ENCODE measurements at regions of chr2 and their contacts with region 1.

Region 1: GRCh38 chr2:207625018-207625907 is at the start of gene METTL21A:
- DNase-seq: peak; percentile 93
- H3K4me3 ChIP-seq: peak within 1 kb of the TSS; percentile 59 to 92 (median 76)
- H3K27ac ChIP-seq: peak within 1 kb of the TSS; percentile 89 to 95 (median 94)
- H3K4me1 ChIP-seq: peaks cover 0 to 33% (median 24%) of the 10 kb centered on the region in 4 donors
- H3K27me3 ChIP-seq: no peaks in the 10 kb centered on the region
- CTCF ChIP-seq: peak in 3 of 4 experiments; percentile 8 to 45 (median 32)
- EP300 ChIP-seq: no peak
- POLR2A ChIP-seq: peak in 1 of 2 donors; percentile 29
- total RNA-seq, gene METTL21A: 12.9 to 23.5 (median 20.5) TPM

Region 2: DNA sequence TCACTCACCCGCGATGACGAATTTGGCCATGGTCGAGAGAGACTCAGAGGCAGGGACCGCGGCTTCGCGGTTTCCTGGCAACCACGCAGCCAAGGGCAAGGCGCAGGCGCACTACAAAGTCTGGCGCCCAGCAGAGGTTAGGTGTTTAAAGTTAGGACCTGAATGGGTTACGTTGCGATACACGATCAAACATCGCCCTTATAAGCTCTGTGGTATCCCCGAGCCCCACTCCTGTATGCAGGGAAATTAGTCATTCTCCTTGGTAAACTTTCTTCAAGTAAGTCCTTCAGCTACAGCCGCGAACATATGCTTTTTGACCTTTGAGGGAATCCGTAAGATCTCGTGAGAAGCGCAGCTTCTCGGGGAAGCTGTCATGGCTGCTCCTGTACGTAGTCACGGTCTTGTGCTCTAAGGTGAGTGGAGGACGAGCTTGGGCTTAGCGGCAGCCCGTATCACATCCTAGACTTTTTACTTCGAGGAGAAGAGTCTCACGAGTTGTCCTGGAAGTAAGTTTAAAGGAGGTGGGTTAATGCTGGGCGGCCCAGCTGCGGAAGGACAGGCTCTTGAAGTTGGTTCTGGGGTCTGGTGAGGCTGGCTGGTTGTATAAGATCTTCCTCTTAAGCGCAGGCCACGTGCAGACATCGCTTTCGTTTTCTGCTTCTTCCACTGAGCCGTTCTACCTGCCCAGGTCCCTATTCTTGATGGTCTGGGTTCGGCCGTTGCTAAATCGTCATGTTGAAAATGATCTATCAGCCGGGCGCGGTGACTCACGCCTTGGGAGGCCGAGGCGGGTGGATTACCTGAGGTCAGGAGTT is 859.8 kb before region 1 on chr2 and contains the starts of genes FASTKD2 and MDH1B:
- intact Hi-C with region 1: loop called (anchors 10 kb)
- DNase-seq: peak; percentile 95
- H3K4me3 ChIP-seq: peak within 1 kb of the TSS; percentile 66 to 88 (median 74)
- H3K27ac ChIP-seq: peak within 1 kb of the TSS; percentile 81 to 93 (median 87)
- H3K4me1 ChIP-seq: peaks cover 0 to 38% (median 30%) of the 10 kb centered on the region in 4 donors
- H3K27me3 ChIP-seq: no peaks in the 10 kb centered on the region
- CTCF ChIP-seq: no peak
- EP300 ChIP-seq: no peak
- POLR2A ChIP-seq: peak; percentile 42 to 43
- total RNA-seq, gene FASTKD2: 27.3 to 35.3 (median 32.0) TPM
- total RNA-seq, gene MDH1B: 1.3 to 2.2 (median 1.8) TPM

Region 3: DNA sequence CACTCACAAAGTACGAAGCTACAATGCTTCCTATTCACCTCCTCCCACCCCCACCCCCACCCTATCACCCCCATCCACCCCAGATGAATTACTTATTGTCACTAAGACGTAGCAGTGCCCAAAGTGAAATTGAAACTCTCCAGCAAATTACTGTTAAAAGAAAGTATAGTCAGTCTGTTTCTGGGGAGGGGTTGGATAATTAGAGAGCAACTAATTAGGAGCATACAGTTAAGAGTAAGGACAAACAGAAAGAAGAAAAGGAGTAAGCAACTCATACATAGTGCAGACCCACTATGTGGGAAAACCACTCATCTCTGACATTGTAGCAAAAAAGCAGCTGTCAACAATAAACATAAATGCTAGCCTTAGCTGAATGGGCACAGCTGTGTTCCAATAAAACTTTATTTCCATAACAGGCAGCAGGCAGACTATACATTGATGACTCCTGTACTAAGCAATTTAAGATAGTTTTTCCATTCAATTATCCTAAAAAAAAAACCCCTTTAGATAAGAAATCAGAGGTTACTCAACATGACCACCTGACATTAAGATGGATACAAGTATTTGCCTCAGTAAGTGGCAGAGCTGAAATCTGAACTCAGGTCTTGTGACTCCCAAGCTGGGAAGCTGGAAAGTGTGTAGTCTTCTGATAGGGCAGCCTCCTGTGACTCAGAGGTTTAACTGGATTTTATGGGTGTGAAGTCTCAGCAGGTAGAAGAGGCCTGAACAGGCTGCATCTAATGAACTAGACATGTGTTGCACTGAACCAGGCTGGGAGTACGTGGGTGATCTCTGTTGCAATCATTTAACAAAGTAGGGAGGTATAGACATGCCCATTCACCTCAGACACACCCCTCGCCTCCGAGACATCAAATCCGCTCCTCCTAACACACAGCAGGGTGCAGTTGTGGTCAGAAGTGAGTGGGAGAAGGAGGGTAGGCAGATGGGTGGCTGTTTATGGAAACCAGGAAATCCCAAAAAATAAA is 287.7 kb before region 1 on chr2:
- intact Hi-C with region 1: no loop called
- DNase-seq: no peak
- H3K4me3 ChIP-seq: no peak overlapping the region
- H3K27ac ChIP-seq: peak overlapping the region in 1 of 4 donors; percentile 27
- H3K4me1 ChIP-seq: peaks cover 0 to 18% (median 14%) of the 10 kb centered on the region in 4 donors
- H3K27me3 ChIP-seq: no peaks in the 10 kb centered on the region
- CTCF ChIP-seq: no peak
- EP300 ChIP-seq: no peak
- POLR2A ChIP-seq: no peak

Region 4: DNA sequence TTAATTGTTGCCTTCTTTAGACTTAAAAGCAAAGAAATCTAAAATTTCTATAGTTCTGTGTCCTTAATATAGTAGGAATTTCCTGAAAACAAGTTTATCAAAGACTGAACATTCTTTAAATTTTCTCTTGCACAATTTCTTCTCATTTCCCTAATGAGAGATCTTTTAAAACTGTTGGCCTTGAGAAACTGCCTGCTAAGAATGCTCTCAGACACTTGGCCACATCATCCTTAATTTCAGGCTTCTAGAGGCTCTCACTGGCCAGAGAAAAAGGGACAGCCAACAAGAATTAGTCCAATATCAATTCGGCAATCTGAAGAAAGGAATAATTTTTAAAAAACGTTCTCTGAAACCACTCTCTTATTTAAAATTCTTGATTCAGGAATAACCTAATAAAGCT is 262.5 kb before region 1 on chr2:
- intact Hi-C with region 1: no loop called
- DNase-seq: no peak
- H3K4me3 ChIP-seq: no peak overlapping the region
- H3K27ac ChIP-seq: no peak overlapping the region
- H3K4me1 ChIP-seq: no peaks in the 10 kb centered on the region
- H3K27me3 ChIP-seq: no peaks in the 10 kb centered on the region
- CTCF ChIP-seq: no peak
- EP300 ChIP-seq: no peak
- POLR2A ChIP-seq: no peak

Region 5: DNA sequence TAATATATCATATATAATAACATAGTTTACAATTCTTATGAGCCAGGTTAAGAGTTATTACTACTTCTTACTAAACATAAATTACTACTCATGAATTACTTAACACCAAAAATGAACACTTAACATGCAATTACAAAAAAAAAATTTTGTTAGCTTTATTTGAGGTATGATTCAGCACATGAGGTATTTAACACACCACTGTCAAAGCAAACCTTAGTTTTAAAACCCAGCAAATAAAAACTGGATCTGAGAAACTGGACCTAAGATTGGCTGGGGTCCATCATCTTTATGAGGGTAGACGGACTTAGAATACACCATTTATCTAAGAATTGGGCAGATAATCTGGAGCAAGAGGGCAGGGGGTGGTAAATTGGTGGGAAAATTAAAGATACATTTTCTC is 177.3 kb before region 1 on chr2:
- intact Hi-C with region 1: no loop called
- DNase-seq: no peak
- H3K4me3 ChIP-seq: no peak overlapping the region
- H3K27ac ChIP-seq: no peak overlapping the region
- H3K4me1 ChIP-seq: no peaks in the 10 kb centered on the region
- H3K27me3 ChIP-seq: no peaks in the 10 kb centered on the region
- CTCF ChIP-seq: no peak
- EP300 ChIP-seq: no peak
- POLR2A ChIP-seq: no peak

Region 6: GRCh38 chr2:207529330-207530159 is 95.7 kb before region 1 on chr2 and contains the start of gene CREB1:
- intact Hi-C with region 1: loop called (anchors 1 kb)
- DNase-seq: peak; percentile 99
- H3K4me3 ChIP-seq: peak within 1 kb of the TSS; percentile 80 to 94 (median 90)
- H3K27ac ChIP-seq: peak within 1 kb of the TSS; percentile 98 to 100 (median 98)
- H3K4me1 ChIP-seq: peaks cover 0 to 47% (median 38%) of the 10 kb centered on the region in 4 donors
- H3K27me3 ChIP-seq: no peaks in the 10 kb centered on the region
- CTCF ChIP-seq: no peak
- EP300 ChIP-seq: peak in 2 of 4 donors; percentile 57 to 91
- POLR2A ChIP-seq: peak; percentile 23 to 95
- total RNA-seq, gene CREB1: 31.3 to 52.0 (median 47.0) TPM

Region 7: DNA sequence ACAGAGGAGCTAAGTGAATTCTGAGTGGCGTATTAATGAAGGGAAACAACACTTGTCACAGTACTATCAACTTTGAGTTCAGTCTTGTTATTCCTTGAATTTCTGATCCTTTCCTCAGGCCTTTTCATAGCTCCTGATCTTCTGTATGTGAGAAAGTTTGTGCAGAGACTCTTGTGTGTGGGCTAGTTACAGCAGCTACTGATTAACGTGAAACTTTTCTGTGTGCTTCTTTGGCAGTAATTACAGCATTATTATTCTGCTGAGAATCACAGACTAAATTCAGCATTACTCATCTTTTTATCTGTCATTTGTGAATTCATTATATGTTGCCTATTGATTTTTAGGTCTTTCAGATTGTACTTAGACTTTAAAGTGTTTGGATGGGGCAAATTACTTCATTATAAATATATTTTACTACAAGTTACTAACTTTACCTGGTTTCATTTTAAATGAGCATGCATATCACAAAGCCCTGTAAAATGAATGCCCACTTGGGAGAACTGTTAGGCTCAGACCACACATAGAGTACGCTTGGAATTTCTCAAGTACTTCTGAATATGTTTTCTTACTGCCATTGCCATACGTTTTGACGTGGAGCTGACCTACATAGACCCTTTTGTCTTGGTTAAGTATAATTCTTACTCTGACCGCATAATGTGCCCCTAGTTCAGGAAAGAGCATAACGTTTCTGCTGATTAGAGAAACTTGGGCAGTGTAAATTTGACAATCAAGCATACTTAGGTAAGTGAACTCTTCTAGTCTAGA is 59.3 kb before region 1 on chr2:
- intact Hi-C with region 1: no loop called
- DNase-seq: no peak
- H3K4me3 ChIP-seq: no peak overlapping the region
- H3K27ac ChIP-seq: no peak overlapping the region
- H3K4me1 ChIP-seq: no peaks in the 10 kb centered on the region
- H3K27me3 ChIP-seq: no peaks in the 10 kb centered on the region
- CTCF ChIP-seq: no peak
- EP300 ChIP-seq: no peak
- POLR2A ChIP-seq: no peak

Region 8: GRCh38 chr2:207769597-207770486 is 144.6 kb after region 1 on chr2 and contains the start of gene FZD5:
- intact Hi-C with region 1: loop called (anchors 2 kb)
- DNase-seq: peak; percentile 97
- H3K4me3 ChIP-seq: peak within 1 kb of the TSS; percentile 75 to 98 (median 86)
- H3K27ac ChIP-seq: peak within 1 kb of the TSS; percentile 81 to 97 (median 92)
- H3K4me1 ChIP-seq: peaks cover 0 to 45% (median 40%) of the 10 kb centered on the region in 4 donors
- H3K27me3 ChIP-seq: no peaks in the 10 kb centered on the region
- CTCF ChIP-seq: peak in 3 of 4 experiments; percentile 22 to 71 (median 28)
- EP300 ChIP-seq: peak in 1 of 4 donors; percentile 35
- POLR2A ChIP-seq: peak in 1 of 2 donors; percentile 70
- total RNA-seq, gene FZD5: 29.3 to 52.0 (median 37.4) TPM

Region 9: DNA sequence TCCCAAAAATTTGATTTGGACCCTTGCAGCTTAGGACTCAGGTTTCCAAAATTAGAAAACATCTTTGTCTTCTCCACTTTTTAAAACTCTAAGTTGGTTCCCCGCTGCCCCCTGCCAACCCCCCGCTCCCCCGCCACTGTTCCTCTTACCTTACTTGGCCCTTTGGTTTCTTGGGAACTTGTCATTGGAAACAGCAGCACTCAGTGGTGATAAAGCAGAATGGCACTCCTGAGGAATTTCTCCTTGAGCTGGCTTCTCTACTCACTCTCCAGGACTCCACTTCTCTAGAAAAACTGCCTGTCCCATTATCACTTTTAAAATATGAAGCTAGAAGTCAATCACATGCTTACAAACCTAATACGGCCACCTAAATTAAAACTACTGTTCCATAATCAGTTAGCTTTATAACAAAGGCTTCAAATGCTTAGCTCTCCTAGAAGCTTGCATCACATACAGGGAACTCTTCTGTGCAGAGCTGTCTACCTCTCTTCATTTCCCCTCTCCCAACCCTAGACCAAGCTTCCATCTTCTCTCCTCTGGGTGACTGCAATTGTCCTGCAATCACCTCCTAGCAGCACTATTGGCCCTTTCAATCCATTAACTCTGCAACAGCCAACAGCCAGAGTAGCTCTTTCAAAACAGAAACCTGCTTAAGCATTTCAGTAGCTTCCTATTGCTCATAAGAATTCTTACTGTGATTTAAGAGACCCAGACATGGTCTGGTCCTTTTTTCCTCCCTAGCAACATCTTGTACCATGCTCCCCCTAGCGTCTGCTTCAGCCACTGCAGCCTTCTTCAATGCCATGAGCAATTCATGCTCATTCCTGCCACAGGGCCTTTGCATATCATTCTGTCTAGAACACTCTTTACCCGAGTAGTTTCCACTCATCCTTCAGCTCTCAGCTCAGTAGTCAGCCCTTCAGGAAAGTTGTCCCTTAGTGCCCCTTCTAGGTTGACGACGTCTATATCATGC is 415.2 kb after region 1 on chr2:
- intact Hi-C with region 1: loop called (anchors 2 kb)
- DNase-seq: peak; percentile 83
- H3K4me3 ChIP-seq: peak overlapping the region in 3 of 4 donors; percentile 1 to 18 (median 7)
- H3K27ac ChIP-seq: peak overlapping the region in 3 of 4 donors; percentile 67 to 77 (median 77)
- H3K4me1 ChIP-seq: peaks cover 0 to 14% (median 0%) of the 10 kb centered on the region in 4 donors
- H3K27me3 ChIP-seq: no peaks in the 10 kb centered on the region
- CTCF ChIP-seq: peak; percentile 56 to 75 (median 68)
- EP300 ChIP-seq: no peak
- POLR2A ChIP-seq: no peak

Region 10: GRCh38 chr2:208254871-208255556 is 629.8 kb after region 1 on chr2 and contains the start of gene IDH1:
- intact Hi-C with region 1: loop called (anchors 10 kb)
- DNase-seq: peak; percentile 97
- H3K4me3 ChIP-seq: peak within 1 kb of the TSS; percentile 66 to 78 (median 74)
- H3K27ac ChIP-seq: peak within 1 kb of the TSS; percentile 79 to 86 (median 84)
- H3K4me1 ChIP-seq: peaks cover 0 to 43% (median 22%) of the 10 kb centered on the region in 4 donors
- H3K27me3 ChIP-seq: no peaks in the 10 kb centered on the region
- CTCF ChIP-seq: peak in 2 of 4 experiments; percentile 19 to 29
- EP300 ChIP-seq: no peak
- POLR2A ChIP-seq: peak in 1 of 2 donors; percentile 46
- total RNA-seq, gene IDH1: 34.2 to 46.4 (median 37.7) TPM

Measured in sigmoid colon (tissue), 7 donors.